ENCODE measurements at regions of chr19 and their contacts with region 1.

Region 1: DNA sequence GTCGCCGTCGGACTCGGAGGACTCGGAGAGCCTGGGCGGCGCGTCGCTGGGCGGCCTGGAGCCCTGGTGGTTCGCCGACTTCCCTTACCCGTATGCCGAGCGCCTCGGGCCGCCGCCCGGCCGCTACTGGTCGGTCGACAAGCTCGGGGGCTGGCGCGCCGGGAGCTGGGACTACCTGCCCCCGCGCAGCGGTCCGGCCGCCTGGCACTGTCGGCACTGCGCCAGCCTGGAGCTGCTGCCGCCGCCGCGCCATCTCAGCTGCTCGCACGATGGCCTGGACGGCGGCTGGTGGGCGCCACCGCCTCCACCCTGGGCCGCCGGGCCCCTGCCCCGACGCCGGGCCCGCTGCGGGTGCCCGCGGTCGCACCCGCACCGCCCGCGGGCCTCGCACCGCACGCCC is 2.5 kb upstream of the GRWD1 start:
- DNase-seq: no peak
- H3K4me3 ChIP-seq: peak overlapping the region in 2 of 3 donors; percentile 86 to 99
- H3K27ac ChIP-seq: no peak overlapping the region
- H3K4me1 ChIP-seq: peaks cover 10 to 12% of the 10 kb centered on the region in 2 donors
- H3K27me3 ChIP-seq: peaks cover 0 to 3% of the 10 kb centered on the region in 2 donors
- CTCF ChIP-seq: no peak
- POLR2A ChIP-seq: no peak

Region 2: GRCh38 chr19:48479686-48480085 is 36.4 kb after region 1 on chr19:
- intact Hi-C with region 1: loop called (anchors 1 kb)
- DNase-seq: no peak
- H3K4me3 ChIP-seq: peak overlapping the region in 1 of 3 donors; percentile 69
- H3K27ac ChIP-seq: peak overlapping the region; percentile 80 to 89
- H3K4me1 ChIP-seq: no peaks in the 10 kb centered on the region
- H3K27me3 ChIP-seq: no peaks in the 10 kb centered on the region
- CTCF ChIP-seq: no peak
- POLR2A ChIP-seq: no peak

Measured in breast epithelium (tissue), 4 donors.